ENCODE measurements at regions of chr3 and their contacts with region 1.

Region 1: DNA sequence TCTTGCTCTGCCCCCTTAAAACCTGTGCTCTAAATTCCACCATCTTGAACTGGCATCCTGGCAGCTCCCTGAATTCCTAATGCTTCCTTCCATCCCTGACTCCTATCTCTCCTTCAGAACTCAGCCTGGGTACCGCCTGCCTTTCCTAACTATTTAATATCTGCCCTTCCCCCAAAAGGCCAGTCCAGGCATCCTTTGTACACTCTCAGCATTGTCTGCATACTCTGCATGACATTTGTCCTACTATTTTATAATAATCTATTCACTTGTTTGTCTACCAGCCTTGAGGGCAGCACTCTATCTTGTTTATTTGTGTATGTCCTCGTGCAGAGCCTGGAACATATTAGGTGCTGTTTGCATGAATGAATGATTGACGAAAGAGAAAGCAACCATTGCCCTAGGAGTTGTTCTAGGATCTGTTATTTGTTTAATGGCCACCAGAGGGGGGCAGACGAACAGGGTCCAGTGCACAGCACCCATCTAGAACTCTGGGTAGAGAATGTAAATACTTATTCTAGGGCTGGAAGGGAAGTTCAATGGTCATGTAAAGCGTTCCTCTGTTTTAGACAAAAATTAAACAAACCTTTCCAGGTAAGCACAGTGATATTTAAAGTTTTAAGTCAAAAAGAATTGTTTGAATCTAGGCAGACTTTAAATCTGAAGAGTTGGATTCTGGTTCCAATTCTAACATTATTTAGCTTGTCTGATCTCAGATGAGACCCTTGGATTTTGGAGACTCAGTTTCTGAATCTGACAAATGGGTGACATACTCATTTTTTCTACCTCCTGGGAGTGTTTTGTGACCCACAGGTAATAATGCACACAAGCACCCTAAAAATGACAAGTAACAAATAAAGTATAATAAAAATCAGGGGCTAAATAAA is 125.8 kb upstream of the GALNT15 start:
- DNase-seq: peak; percentile 84
- H3K4me3 Mint-ChIP-seq: no peak overlapping the region
- H3K27ac Mint-ChIP-seq: peak overlapping the region; percentile 3
- H3K4me1 Mint-ChIP-seq: peaks cover 15% of the 10 kb centered on the region
- H3K27me3 Mint-ChIP-seq: no peaks in the 10 kb centered on the region
- CTCF ChIP-seq: peak; percentile 72

Region 2: DNA sequence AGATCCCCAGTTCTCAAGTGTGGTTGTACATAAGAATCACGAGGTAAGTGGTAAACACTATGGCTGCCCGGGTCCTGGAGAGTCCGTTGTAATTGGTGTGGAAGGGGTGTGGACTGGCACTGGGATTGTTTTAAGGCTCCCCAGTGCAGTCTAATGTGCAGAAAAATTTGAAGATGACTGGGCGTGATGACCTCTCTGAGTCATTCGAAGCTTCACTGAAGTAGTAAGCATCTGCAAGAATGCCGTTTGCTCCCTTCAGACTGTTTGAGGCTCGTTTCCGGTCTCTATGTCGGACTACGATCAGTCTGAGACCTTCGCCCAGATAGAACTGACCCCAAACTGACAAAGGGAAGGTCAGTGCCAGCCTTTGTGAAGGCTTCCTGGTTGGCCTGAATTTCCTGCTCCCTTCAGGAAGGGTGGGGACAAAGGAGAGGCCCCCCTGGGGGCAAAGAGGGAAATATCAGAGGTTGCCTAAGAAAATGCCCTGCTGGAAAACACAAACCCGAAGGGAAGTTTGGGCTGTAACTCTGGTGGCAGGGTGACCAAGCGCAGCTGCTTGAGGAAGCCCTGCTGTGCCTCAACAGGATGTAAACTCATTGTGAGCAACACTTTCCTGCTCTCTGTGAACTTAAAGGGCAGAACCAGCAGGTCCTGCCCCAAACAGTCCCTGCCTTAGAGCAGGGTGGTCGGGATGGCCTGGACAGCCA is 412.5 kb before region 1 on chr3:
- CTCF ChIA-PET with region 1: no interaction called
- POLR2A ChIA-PET with region 1: no interaction called
- intact Hi-C with region 1: no loop called
- DNase-seq: peak; percentile 84
- H3K4me3 Mint-ChIP-seq: peak overlapping the region; percentile 54
- H3K27ac Mint-ChIP-seq: peak overlapping the region; percentile 93
- H3K4me1 Mint-ChIP-seq: peaks cover 44% of the 10 kb centered on the region
- H3K27me3 Mint-ChIP-seq: no peaks in the 10 kb centered on the region
- CTCF ChIP-seq: no peak

Region 3: GRCh38 chr3:16031434-16031833 is 17.2 kb before region 1 on chr3:
- CTCF ChIA-PET with region 1: interaction called, 13 read pairs
- POLR2A ChIA-PET with region 1: interaction called, 4 read pairs
- intact Hi-C with region 1: no loop called
- DNase-seq: no peak
- H3K4me3 Mint-ChIP-seq: no peak overlapping the region
- H3K27ac Mint-ChIP-seq: no peak overlapping the region
- H3K4me1 Mint-ChIP-seq: no peaks in the 10 kb centered on the region
- H3K27me3 Mint-ChIP-seq: no peaks in the 10 kb centered on the region
- CTCF ChIP-seq: no peak

Region 4: DNA sequence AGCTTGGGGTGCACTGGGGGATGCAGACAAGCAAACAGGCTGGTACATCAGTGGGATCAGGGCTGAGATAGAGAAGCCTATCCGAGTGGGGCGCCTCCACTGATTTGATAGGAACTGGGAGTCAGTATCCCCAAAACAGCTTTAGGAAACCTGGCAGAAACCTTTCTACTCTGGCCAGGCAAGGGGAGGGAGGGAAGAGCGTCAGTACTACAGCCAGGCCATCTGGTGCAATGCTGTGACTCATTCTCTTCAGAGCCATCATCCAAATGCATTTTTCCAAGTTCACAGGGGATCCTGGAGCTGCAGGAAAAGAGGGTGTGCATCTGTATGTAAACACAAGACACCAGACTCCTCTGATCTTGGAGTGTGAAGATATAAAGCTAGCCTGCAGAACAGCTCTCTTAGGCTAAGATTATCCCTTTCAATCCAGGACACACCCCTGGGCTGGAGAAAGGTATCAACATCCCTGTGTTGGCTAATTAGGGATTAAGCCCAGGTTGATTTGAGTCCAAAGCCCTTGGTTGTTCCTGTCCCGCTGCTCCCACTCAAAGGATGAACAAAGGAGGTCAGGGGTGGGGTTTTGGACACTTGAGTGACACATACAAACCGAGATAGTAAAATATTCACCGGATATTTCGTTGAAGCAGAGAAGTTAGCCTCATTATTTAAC is 135.1 kb after region 1 on chr3:
- CTCF ChIA-PET with region 1: interaction called, 183 read pairs
- POLR2A ChIA-PET with region 1: interaction called, 21 read pairs
- intact Hi-C with region 1: loop called (anchors 1 kb)
- DNase-seq: peak; percentile 82
- H3K4me3 Mint-ChIP-seq: no peak overlapping the region
- H3K27ac Mint-ChIP-seq: peak overlapping the region; percentile 26
- H3K4me1 Mint-ChIP-seq: peaks cover 37% of the 10 kb centered on the region
- H3K27me3 Mint-ChIP-seq: no peaks in the 10 kb centered on the region
- CTCF ChIP-seq: no peak

Region 5: GRCh38 chr3:16247276-16248061 is 198.8 kb after region 1 on chr3:
- CTCF ChIA-PET with region 1: interaction called, 64 read pairs
- POLR2A ChIA-PET with region 1: interaction called, 3 read pairs
- intact Hi-C with region 1: loop called (anchors 1 kb)
- DNase-seq: peak; percentile 89
- H3K4me3 Mint-ChIP-seq: no peak overlapping the region
- H3K27ac Mint-ChIP-seq: no peak overlapping the region
- H3K4me1 Mint-ChIP-seq: peaks cover 32% of the 10 kb centered on the region
- H3K27me3 Mint-ChIP-seq: no peaks in the 10 kb centered on the region
- CTCF ChIP-seq: peak; percentile 95

Region 6: GRCh38 chr3:16550676-16551341 is 502.1 kb after region 1 on chr3:
- CTCF ChIA-PET with region 1: no interaction called
- POLR2A ChIA-PET with region 1: no interaction called
- intact Hi-C with region 1: loop called (anchors 1 kb)
- DNase-seq: peak; percentile 90
- H3K4me3 Mint-ChIP-seq: no peak overlapping the region
- H3K27ac Mint-ChIP-seq: peak overlapping the region; percentile 54
- H3K4me1 Mint-ChIP-seq: peaks cover 22% of the 10 kb centered on the region
- H3K27me3 Mint-ChIP-seq: peaks cover 20% of the 10 kb centered on the region
- CTCF ChIP-seq: peak; percentile 82

Measured in MCF 10A (cell line).